IMR-90 (cell line): ENCODE measurements at regions of chr12 and their contacts with region 1.

Region 1: DNA sequence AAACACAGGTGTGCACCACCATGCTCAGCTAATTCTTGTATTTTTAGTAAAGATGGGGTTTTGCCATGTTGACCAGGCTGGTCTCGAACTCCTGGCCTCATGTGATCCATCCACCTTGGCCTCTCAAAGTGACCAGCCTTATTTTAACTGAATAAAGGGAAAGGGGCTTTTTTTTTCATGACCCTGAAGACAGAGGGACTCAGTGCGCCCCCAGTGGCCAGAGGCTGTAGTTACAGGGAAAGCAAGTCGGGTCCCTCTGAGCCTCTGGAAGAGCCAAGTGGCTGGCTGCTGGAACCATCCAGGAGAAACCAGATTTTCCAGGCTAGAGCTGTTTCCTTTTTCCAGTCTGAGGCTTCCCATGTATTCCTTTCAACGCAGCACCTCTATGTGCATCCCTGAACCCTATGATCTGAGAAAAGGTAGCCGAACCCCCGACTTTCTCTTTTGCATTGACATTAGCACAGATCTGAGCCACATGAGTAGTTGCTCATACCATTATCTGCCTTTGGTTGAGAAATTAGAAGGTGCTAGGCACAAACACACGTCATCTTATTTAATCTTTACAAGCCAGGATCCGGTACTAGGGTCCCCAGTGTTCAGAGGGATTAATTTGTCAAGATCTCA is 342.7 kb downstream of the CACNA1C start:
- DNase-seq: peak; percentile 28
- ATAC-seq: peak; percentile 57
- H3K4me3 ChIP-seq: no peak overlapping the region
- H3K27ac ChIP-seq: peak overlapping the region; percentile 60; the same call in 1 of the 2 replicates
- H3K4me1 ChIP-seq: peaks cover 12% of the 10 kb centered on the region
- H3K27me3 ChIP-seq: no peaks in the 10 kb centered on the region
- CTCF ChIP-seq: peak; percentile 69
- POLR2A ChIP-seq: no peak
- RAD21 ChIP-seq: peak; percentile 51

Region 2: DNA sequence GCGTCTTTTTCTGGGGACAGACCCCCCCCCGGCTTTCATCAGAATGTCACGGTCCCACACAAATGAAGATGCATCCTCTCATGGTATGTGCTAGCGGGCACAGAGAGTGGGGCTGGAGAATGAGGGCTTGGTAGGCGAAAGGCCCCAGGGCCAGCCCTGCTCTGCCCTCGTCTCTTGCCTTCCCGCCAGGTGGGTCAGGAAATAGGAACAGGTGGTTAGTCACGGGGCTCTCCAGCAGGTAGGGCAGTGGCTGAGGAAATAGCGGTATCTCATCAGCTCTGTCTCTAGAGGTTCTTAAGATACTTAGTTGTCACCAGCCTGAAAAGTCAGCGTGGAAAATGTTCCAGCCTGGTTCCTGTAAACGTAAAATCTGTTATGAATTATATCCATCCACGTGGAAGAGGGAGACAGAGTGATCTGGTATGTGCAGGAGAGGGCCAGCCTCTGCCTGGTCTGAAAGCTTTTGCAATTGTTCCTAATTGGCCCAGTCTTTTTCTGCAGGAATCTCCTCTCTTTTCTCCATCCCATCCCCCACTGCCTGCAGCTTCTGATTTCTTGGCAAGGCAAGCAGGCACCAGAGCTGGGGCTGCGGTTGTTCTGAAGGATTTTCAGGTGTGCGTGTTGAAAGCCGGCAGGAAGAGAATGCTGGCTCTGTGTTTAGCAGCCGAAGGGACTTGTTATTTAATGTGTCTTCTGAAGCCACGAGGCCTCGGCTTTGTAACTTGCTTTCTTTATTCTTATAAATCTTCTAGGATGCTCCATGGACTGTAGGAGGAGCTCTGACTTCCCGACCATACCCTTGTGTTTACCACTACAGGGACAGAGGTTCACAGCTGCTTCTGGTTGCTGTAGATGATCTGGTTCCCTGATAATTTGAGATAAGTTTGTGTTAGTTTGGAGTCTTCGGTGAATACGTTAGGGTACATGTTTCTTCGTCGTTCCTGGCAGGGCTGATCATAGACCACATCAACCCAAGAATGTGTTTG is 211.6 kb before region 1 on chr12:
- CTCF ChIA-PET with region 1: no interaction called
- POLR2A ChIA-PET with region 1: no interaction called
- dilution Hi-C with region 1: no loop called
- in situ Hi-C with region 1: no loop called
- intact Hi-C with region 1: no loop called
- DNase-seq: peak; percentile 75
- ATAC-seq: peak; percentile 70
- H3K4me3 ChIP-seq: no peak overlapping the region
- H3K27ac ChIP-seq: peak overlapping the region; percentile 68; the same call in 1 of the 2 replicates
- H3K4me1 ChIP-seq: peaks cover 24% of the 10 kb centered on the region
- H3K27me3 ChIP-seq: no peaks in the 10 kb centered on the region
- CTCF ChIP-seq: peak; percentile 57
- POLR2A ChIP-seq: no peak
- RAD21 ChIP-seq: peak; percentile 48

Region 3: GRCh38 chr12:2301531-2302461 is 93.7 kb before region 1 on chr12:
- CTCF ChIA-PET with region 1: no interaction called
- POLR2A ChIA-PET with region 1: no interaction called
- dilution Hi-C with region 1: no loop called
- in situ Hi-C with region 1: no loop called
- intact Hi-C with region 1: loop called (anchors 5 kb)
- DNase-seq: peak; percentile 80
- ATAC-seq: peak; percentile 93
- H3K4me3 ChIP-seq: no peak overlapping the region
- H3K27ac ChIP-seq: peak overlapping the region; percentile 87
- H3K4me1 ChIP-seq: peaks cover 28% of the 10 kb centered on the region
- H3K27me3 ChIP-seq: no peaks in the 10 kb centered on the region
- CTCF ChIP-seq: no peak
- POLR2A ChIP-seq: no peak
- RAD21 ChIP-seq: no peak

Region 4: GRCh38 chr12:2890388-2891239 is 495.1 kb after region 1 on chr12 and contains the start of gene TULP3:
- CTCF ChIA-PET with region 1: no interaction called
- POLR2A ChIA-PET with region 1: no interaction called
- dilution Hi-C with region 1: no loop called
- in situ Hi-C with region 1: no loop called
- intact Hi-C with region 1: no loop called
- DNase-seq: peak; percentile 96
- ATAC-seq: peak; percentile 93
- H3K4me3 ChIP-seq: peak within 1 kb of the TSS; percentile 78
- H3K27ac ChIP-seq: peak within 1 kb of the TSS; percentile 87
- H3K4me1 ChIP-seq: peaks cover 7% of the 10 kb centered on the region
- H3K27me3 ChIP-seq: no peaks in the 10 kb centered on the region
- CTCF ChIP-seq: peak; percentile 18; the same call in 1 of the 2 replicates
- POLR2A ChIP-seq: peak; percentile 91
- RAD21 ChIP-seq: no peak
- total RNA-seq, gene TULP3: 31.1 and 35.5 TPM in 2 replicates